SK-N-SH (cell line): ENCODE measurements at regions of chr17 and their contacts with region 1.

Region 1: GRCh38 chr17:80866147-80866793 is 125.4 kb upstream of the CHMP6 start:
- DNase-seq: peak; percentile 88
- H3K4me3 ChIP-seq: no peak overlapping the region
- H3K27ac ChIP-seq: no peak overlapping the region
- H3K4me1 ChIP-seq: peaks cover 0 to 14% of the 10 kb centered on the region in 2 experiments; a peak in 2 of 4 replicates
- H3K27me3 ChIP-seq: no peaks in the 10 kb centered on the region
- CTCF ChIP-seq: peak; percentile 92
- EP300 ChIP-seq: no peak
- RAD21 ChIP-seq: peak; percentile 76

Region 2: GRCh38 chr17:80832888-80833583 is 33.2 kb before region 1 on chr17:
- CTCF ChIA-PET with region 1: interaction called, 20 read pairs
- POLR2A ChIA-PET with region 1: interaction called, 3 read pairs
- DNase-seq: peak; percentile 99
- H3K4me3 ChIP-seq: peak overlapping the region; percentile 48 to 54
- H3K27ac ChIP-seq: peak overlapping the region; percentile 93 to 97
- H3K4me1 ChIP-seq: peaks cover 20 to 47% of the 10 kb centered on the region in 2 experiments
- H3K27me3 ChIP-seq: no peaks in the 10 kb centered on the region
- CTCF ChIP-seq: no peak
- EP300 ChIP-seq: peak; percentile 69 to 73; a peak in 3 of 4 replicates
- RAD21 ChIP-seq: 0 out of 2 replicates have a peak, but pooled peaks have one; percentile 12

Region 3: GRCh38 chr17:80899402-80900268 is 33.4 kb after region 1 on chr17:
- CTCF ChIA-PET with region 1: interaction called, 16 read pairs
- POLR2A ChIA-PET with region 1: interaction called, 3 read pairs
- DNase-seq: peak; percentile 87
- H3K4me3 ChIP-seq: no peak overlapping the region
- H3K27ac ChIP-seq: no peak overlapping the region
- H3K4me1 ChIP-seq: no peaks in the 10 kb centered on the region
- H3K27me3 ChIP-seq: no peaks in the 10 kb centered on the region
- CTCF ChIP-seq: peak; percentile 89
- EP300 ChIP-seq: no peak
- RAD21 ChIP-seq: peak; percentile 78

Region 4: GRCh38 chr17:80981062-80981902 is 115.0 kb after region 1 on chr17:
- CTCF ChIA-PET with region 1: interaction called, 12 read pairs
- POLR2A ChIA-PET with region 1: no interaction called
- DNase-seq: peak; percentile 99
- H3K4me3 ChIP-seq: peak overlapping the region; percentile 25 to 44
- H3K27ac ChIP-seq: no peak overlapping the region
- H3K4me1 ChIP-seq: no peaks in the 10 kb centered on the region; a peak in 1 of 4 replicates
- H3K27me3 ChIP-seq: no peaks in the 10 kb centered on the region
- CTCF ChIP-seq: peak; percentile 96
- EP300 ChIP-seq: no peak
- RAD21 ChIP-seq: peak; percentile 86